ENCODE measurements at regions of chr1 and their contacts with region 1.

Region 1: GRCh38 chr1:150281837-150282653 is at the start of gene CIART:
- DNase-seq: peak; percentile 91 to 97
- H3K4me3 ChIP-seq: peak within 1 kb of the TSS; percentile 63
- H3K4me3 Mint-ChIP-seq: peak within 1 kb of the TSS; percentile 84
- H3K27ac Mint-ChIP-seq: peak within 1 kb of the TSS; percentile 67
- H3K4me1 ChIP-seq: peaks cover 4% of the 10 kb centered on the region; the same call in 1 of the 2 replicates
- H3K4me1 Mint-ChIP-seq: peaks cover 16% of the 10 kb centered on the region
- H3K27me3 ChIP-seq: no peaks in the 10 kb centered on the region
- H3K27me3 Mint-ChIP-seq: peaks cover 5% of the 10 kb centered on the region
- CTCF ChIP-seq: no peak
- total RNA-seq, gene CIART: 2.6 and 3.2 TPM in 2 replicates

Region 2: GRCh38 chr1:150256554-150257341 is 25.3 kb before region 1 on chr1:
- CTCF ChIA-PET with region 1: interaction called, 29 read pairs
- POLR2A ChIA-PET with region 1: no interaction called
- intact Hi-C with region 1: loop called (anchors 1 kb)
- DNase-seq: no peak
- H3K4me3 ChIP-seq: no peak overlapping the region
- H3K4me3 Mint-ChIP-seq: peak overlapping the region; percentile 37
- H3K27ac Mint-ChIP-seq: peak overlapping the region; percentile 11
- H3K4me1 ChIP-seq: peaks cover 24% of the 10 kb centered on the region
- H3K4me1 Mint-ChIP-seq: peaks cover 29% of the 10 kb centered on the region
- H3K27me3 ChIP-seq: no peaks in the 10 kb centered on the region
- H3K27me3 Mint-ChIP-seq: peaks cover 2% of the 10 kb centered on the region
- CTCF ChIP-seq: no peak

Region 3: GRCh38 chr1:150268705-150269403 is 13.2 kb before region 1 on chr1 and contains the start of gene APH1A:
- CTCF ChIA-PET with region 1: interaction called, 3 read pairs
- POLR2A ChIA-PET with region 1: no interaction called
- intact Hi-C with region 1: loop called (anchors 2 kb)
- DNase-seq: peak; percentile 95 to 97
- H3K4me3 ChIP-seq: peak within 1 kb of the TSS; percentile 68
- H3K4me3 Mint-ChIP-seq: peak within 1 kb of the TSS; percentile 87
- H3K27ac Mint-ChIP-seq: peak within 1 kb of the TSS; percentile 60
- H3K4me1 ChIP-seq: no peaks in the 10 kb centered on the region
- H3K4me1 Mint-ChIP-seq: peaks cover 14% of the 10 kb centered on the region
- H3K27me3 ChIP-seq: no peaks in the 10 kb centered on the region
- H3K27me3 Mint-ChIP-seq: no peaks in the 10 kb centered on the region
- CTCF ChIP-seq: no peak
- total RNA-seq, gene APH1A: 93.8 and 96.7 TPM in 2 replicates

Region 4: DNA sequence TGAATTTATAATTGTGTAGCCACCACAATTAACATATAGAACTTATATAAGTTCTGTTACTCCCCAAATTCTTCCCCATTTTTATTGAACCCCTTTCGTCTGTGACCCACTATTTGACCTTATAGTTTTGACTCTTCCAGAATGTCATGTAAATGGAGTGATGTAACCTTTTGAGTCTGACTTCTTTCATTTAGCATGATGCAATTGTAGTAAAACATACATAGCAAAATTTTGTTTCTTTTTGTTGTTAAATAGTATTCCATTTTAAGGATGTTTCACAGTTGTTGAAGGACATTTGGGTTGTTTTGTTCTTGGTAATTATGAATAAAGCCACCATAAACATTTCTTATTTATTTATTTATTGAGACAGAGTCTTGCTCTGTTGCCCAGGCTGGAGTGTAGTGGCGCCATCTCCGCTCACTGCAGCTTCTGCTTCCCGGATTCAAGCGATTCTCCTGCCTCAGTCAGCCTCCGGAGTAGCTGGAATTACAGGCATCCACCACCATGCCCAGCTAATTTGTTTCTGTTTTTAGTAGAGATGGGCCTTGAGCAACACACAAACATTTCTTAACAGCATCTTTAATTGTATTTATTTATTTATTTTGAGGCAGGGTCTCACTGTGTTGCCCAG is 115.5 kb after region 1 on chr1:
- CTCF ChIA-PET with region 1: no interaction called
- POLR2A ChIA-PET with region 1: no interaction called
- intact Hi-C with region 1: no loop called
- DNase-seq: no peak
- H3K4me3 ChIP-seq: no peak overlapping the region
- H3K4me3 Mint-ChIP-seq: no peak overlapping the region
- H3K27ac Mint-ChIP-seq: no peak overlapping the region
- H3K4me1 ChIP-seq: no peaks in the 10 kb centered on the region
- H3K4me1 Mint-ChIP-seq: no peaks in the 10 kb centered on the region
- H3K27me3 ChIP-seq: no peaks in the 10 kb centered on the region
- H3K27me3 Mint-ChIP-seq: no peaks in the 10 kb centered on the region
- CTCF ChIP-seq: no peak

Region 5: DNA sequence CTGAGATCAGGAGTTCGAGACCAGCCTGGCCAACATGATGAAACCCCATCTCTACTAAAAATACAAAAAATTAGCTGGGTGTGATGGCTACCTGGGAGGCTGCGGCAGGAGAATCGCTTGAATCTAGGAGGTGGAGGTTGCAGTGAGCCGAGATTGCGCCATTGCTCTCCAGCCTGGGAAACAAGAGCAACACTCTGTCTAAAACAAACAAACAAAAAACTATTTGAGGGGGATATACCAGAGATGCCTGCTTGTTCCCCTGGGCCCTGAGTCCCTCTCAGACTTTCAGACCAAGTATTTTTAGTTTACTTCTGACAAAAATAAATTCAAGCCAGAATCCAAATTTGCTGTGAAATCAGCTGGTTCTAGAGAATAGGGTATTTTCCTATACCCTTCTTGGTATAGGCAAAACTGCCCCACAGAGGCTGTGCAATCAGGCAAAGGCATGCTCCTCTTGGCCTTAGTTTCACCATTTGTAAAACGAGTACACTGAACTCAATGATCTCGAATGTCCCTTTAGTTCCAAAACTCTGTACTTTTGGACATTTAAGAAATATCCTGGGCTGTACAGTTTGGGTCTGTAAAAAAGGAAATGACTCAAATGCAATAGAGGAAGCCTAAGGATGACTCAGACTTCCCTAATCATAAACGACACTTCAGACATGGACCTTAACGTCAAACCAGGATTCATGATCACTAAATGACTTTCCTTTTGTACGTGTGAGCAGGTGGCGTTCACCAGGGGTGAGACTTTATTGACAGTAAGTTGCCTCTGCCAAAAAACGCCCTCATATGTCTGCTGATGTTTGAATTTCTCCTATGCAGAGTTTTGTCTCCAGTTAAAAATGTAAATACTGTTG is 331.2 kb after region 1 on chr1:
- CTCF ChIA-PET with region 1: no interaction called
- POLR2A ChIA-PET with region 1: no interaction called
- intact Hi-C with region 1: no loop called
- DNase-seq: no peak
- H3K4me3 ChIP-seq: no peak overlapping the region
- H3K4me3 Mint-ChIP-seq: no peak overlapping the region
- H3K27ac Mint-ChIP-seq: peak overlapping the region; percentile 42
- H3K4me1 ChIP-seq: peaks cover 23% of the 10 kb centered on the region
- H3K4me1 Mint-ChIP-seq: peaks cover 23% of the 10 kb centered on the region
- H3K27me3 ChIP-seq: no peaks in the 10 kb centered on the region
- H3K27me3 Mint-ChIP-seq: no peaks in the 10 kb centered on the region
- CTCF ChIP-seq: no peak

Measured in Caco-2 (cell line).